IMR-90 (cell line): ENCODE measurements at regions of chr7 and their contacts with region 1.

Region 1: DNA sequence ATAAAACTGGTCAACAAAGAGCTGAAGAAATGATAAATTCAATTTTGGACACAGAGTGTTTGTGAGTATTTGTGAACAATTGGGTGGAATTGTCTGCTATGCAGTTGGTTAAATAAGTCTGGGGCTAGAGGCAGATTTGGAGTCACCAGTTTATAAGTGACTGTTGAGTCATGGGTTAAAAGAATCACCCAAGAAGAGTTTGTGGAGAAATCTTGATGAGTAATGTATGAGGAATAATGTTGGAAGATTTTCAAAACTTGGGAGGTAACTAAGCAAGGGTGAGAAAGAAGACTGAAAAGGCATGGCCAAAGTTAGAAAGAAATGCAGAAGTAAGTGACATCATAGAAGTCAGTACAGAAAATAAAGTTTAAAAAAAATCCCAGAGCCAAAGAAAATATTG is 750.7 kb downstream of the MAGI2 start:
- DNase-seq: peak; percentile 99
- ATAC-seq: peak; percentile 95
- H3K4me3 ChIP-seq: no peak overlapping the region
- H3K27ac ChIP-seq: no peak overlapping the region
- H3K4me1 ChIP-seq: peaks cover 2% of the 10 kb centered on the region; the same call in 1 of the 2 replicates
- H3K27me3 ChIP-seq: no peaks in the 10 kb centered on the region
- CTCF ChIP-seq: no peak
- POLR2A ChIP-seq: no peak
- RAD21 ChIP-seq: no peak

Region 2: GRCh38 chr7:78476851-78477405 is 225.8 kb before region 1 on chr7:
- CTCF ChIA-PET with region 1: no interaction called
- POLR2A ChIA-PET with region 1: no interaction called
- dilution Hi-C with region 1: no loop called
- in situ Hi-C with region 1: no loop called
- intact Hi-C with region 1: loop called (anchors 1 kb)
- DNase-seq: no peak
- ATAC-seq: no peak
- H3K4me3 ChIP-seq: no peak overlapping the region
- H3K27ac ChIP-seq: no peak overlapping the region
- H3K4me1 ChIP-seq: peaks cover 7% of the 10 kb centered on the region; the same call in 1 of the 2 replicates
- H3K27me3 ChIP-seq: no peaks in the 10 kb centered on the region
- CTCF ChIP-seq: no peak
- POLR2A ChIP-seq: no peak
- RAD21 ChIP-seq: no peak

Region 3: DNA sequence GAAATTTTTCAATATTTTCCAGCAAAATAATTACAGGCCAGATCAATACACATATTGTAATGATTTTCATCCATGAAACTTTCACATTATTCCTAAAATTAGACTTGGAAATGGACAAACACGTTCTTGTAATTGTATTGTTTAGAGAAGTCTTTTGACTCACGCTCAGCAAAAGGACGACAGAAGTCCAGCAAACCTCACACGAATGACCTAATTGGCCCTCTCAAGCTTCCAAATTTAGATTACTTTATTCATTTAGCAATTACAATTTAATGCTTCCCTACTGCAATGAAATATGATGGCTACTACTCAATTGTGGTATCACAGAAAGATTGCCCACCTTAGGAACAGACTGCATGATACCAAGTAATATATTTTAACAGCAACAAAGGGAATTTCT is 48.5 kb after region 1 on chr7:
- CTCF ChIA-PET with region 1: no interaction called
- POLR2A ChIA-PET with region 1: no interaction called
- dilution Hi-C with region 1: no loop called
- in situ Hi-C with region 1: no loop called
- intact Hi-C with region 1: loop called (anchors 10 kb)
- DNase-seq: no peak
- ATAC-seq: no peak
- H3K4me3 ChIP-seq: no peak overlapping the region
- H3K27ac ChIP-seq: no peak overlapping the region
- H3K4me1 ChIP-seq: no peaks in the 10 kb centered on the region
- H3K27me3 ChIP-seq: no peaks in the 10 kb centered on the region
- CTCF ChIP-seq: no peak
- POLR2A ChIP-seq: no peak
- RAD21 ChIP-seq: no peak

Region 4: GRCh38 chr7:78912781-78913180 is 210.0 kb after region 1 on chr7:
- CTCF ChIA-PET with region 1: no interaction called
- POLR2A ChIA-PET with region 1: no interaction called
- dilution Hi-C with region 1: no loop called
- in situ Hi-C with region 1: no loop called
- intact Hi-C with region 1: loop called (anchors 10 kb)
- DNase-seq: peak; percentile 54
- ATAC-seq: no peak
- H3K4me3 ChIP-seq: no peak overlapping the region
- H3K27ac ChIP-seq: no peak overlapping the region
- H3K4me1 ChIP-seq: no peaks in the 10 kb centered on the region
- H3K27me3 ChIP-seq: no peaks in the 10 kb centered on the region
- CTCF ChIP-seq: no peak
- POLR2A ChIP-seq: no peak
- RAD21 ChIP-seq: no peak